GM10248 (cell line): ENCODE measurements at regions of chr6 and their contacts with region 1.

Region 1: DNA sequence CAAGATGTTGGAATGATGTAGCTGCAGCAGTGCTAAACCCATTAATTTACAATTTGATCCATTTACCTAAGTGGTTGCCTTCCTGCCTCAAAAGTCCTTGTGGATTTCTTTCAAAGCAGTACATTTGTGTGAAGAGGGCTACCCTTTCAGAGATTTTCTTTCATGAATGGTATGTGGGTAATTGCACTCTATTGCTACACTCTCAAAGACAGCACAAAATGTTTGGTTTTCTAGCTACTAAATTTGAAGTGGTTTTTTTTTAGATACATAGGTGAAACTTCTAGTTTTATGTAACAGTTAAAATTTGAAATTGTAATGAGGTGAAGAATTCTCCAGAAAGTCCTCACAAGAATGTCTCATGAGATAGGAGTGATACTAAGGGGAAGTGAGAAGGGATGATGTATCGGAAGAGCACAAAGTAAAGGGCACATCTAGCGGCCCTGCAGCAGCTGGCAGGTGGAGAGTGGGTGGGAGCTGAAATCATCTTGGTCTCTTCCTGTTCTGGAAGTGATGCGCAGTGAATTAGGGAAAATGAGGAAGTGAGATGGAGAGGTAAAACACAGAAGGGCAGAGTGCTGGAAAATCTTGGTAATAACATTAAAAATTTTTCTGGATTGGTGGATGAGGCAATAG is 236.8 kb upstream of the MAN1A1 start:
- DNase-seq: peak; percentile 18
- CTCF ChIP-seq: no peak

Region 2: GRCh38 chr6:119116712-119117281 is 469.6 kb before region 1 on chr6:
- CTCF ChIA-PET with region 1: no interaction called
- POLR2A ChIA-PET with region 1: no interaction called
- DNase-seq: no peak
- CTCF ChIP-seq: no peak

Region 3: GRCh38 chr6:119517428-119517827 is 68.9 kb before region 1 on chr6:
- CTCF ChIA-PET with region 1: no interaction called
- POLR2A ChIA-PET with region 1: no interaction called
- DNase-seq: no peak
- CTCF ChIP-seq: no peak

Region 4: DNA sequence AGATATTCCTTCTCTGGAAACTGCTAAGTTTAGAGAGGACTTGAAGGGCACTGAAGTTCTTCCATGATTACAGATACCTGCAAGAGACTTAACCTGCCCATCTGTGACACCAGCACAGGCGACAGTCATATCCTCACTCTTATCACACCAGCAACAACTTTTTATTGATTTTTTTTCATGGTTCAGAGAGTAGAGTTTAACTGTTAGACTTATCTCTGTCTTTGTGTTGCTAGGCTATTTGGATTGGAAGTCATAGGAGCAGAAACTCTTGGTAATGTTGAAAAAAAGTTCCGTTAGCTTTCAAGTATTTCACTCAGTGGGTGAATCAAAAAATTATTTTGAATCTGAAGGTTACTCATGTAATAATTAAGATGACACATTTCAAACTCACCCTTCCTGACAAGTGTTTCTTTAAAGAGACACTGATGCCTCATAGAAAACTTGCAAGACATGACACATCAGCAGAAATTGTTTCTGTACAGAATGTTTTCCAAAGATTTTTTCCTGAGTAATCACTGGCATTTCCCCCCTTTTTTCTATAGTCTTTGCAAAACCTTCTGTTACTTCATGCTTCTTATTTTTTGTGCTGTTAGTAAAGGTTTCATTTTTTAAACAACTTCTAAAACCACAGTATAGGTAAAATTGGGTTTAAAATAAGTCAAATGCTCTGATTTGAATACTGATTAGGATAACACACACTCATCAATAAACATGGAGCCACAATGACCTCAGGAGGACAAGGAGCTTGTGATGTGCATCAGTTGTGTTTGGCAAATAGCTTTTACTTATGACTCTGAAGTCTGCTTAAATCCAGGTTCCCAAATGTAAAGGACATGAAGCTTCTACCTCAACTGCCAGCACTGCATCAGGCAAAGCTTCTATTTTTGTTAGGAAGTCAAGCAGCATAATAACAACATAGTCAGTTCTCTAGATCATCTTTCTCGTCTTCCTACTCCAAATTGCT is 16.1 kb after region 1 on chr6:
- CTCF ChIA-PET with region 1: interaction called, 10 read pairs
- POLR2A ChIA-PET with region 1: no interaction called
- DNase-seq: no peak
- CTCF ChIP-seq: no peak